Activated B cell treated with CpG ODN at 0.5 μM for 24 hours (primary cell): ENCODE measurements at regions of chr22 and their contacts with region 1.

Region 1: GRCh38 chr22:20116951-20117645 is at the start of gene TRMT2A:
- DNase-seq: peak; percentile 97
- ATAC-seq: peak; percentile 81
- H3K4me3 Mint-ChIP-seq: peak within 1 kb of the TSS; percentile 91
- H3K27ac Mint-ChIP-seq: peak within 1 kb of the TSS; percentile 92
- H3K4me1 Mint-ChIP-seq: peaks cover 44% of the 10 kb centered on the region
- H3K27me3 Mint-ChIP-seq: no peaks in the 10 kb centered on the region
- CTCF ChIP-seq: no peak
- total RNA-seq, gene TRMT2A: 77.4 and 91.7 TPM in 2 replicates

Region 2: GRCh38 chr22:19970479-19971275 is 146.4 kb before region 1 on chr22:
- CTCF ChIA-PET with region 1: no interaction called
- POLR2A ChIA-PET with region 1: no interaction called
- intact Hi-C with region 1: loop called (anchors 2 kb)
- DNase-seq: peak; percentile 74
- ATAC-seq: peak; percentile 87
- H3K4me3 Mint-ChIP-seq: no peak overlapping the region
- H3K27ac Mint-ChIP-seq: no peak overlapping the region
- H3K4me1 Mint-ChIP-seq: peaks cover 9% of the 10 kb centered on the region
- H3K27me3 Mint-ChIP-seq: no peaks in the 10 kb centered on the region
- CTCF ChIP-seq: peak; percentile 43

Region 3: DNA sequence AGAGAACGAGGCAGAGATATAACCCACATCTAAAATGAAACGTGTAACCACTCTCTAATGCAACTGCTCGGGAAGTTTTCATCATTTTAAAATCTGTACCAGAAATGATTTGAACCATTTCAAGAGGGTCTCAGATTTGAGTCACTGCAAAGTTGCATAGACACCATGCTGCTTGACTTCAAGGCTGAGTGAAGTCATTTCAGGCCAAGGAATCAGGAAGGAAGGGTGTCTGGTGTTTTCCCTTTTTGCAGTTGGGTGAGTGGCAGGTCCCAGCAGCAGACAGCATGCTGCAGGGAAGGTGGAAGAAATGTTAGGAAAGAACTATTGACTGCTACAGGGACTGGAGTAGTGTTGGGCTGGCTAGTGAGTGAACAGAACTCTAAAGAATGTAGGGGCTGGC is 79.7 kb before region 1 on chr22:
- CTCF ChIA-PET with region 1: no interaction called
- POLR2A ChIA-PET with region 1: interaction called, 3 read pairs
- intact Hi-C with region 1: loop called (anchors 5 kb)
- DNase-seq: no peak
- ATAC-seq: peak; percentile 26
- H3K4me3 Mint-ChIP-seq: peak overlapping the region; percentile 56
- H3K27ac Mint-ChIP-seq: peak overlapping the region; percentile 85
- H3K4me1 Mint-ChIP-seq: peaks cover 62% of the 10 kb centered on the region
- H3K27me3 Mint-ChIP-seq: no peaks in the 10 kb centered on the region
- CTCF ChIP-seq: no peak

Region 4: DNA sequence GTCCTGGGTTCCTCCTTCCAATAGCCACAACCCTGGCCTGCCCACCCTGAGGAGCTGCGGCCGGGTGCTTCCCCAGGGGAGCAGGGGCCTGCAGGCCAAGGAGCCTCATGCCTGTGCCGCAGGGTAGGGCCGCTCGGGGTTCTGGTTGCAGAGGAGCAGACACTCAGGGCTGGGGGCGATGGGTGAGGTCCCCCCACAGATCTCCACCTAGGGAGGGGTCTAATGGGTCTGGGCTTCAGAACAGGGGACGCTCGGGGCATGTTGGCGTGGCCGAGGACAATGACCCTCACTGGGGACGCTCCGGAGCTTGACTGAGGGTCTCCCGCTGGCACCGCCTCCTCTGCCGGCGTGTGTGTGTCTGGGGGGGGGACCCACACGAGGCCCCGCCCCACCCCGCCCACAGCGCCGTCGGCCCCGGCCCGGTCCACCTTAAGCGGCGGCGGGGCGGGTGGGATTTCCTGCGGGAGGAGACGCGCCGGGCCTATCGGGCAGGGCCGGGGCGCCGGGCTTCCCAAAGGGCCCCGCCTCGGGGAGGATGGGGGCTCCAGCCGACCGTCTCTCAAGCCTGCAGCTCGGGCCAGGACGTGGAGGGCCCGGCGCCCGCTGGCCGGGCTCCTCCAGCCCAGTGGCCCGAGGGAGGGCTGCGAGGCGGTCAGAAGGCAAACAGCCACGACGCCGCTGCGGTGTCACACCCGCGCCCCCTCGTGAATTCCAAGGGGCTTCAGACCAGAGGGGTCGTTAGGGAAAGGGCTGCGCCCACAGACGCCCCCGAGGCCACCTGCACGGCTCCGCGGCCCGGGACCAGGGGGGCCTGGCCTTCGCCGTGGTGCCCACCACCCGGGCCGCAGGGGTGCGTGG is 13.9 kb after region 1 on chr22:
- CTCF ChIA-PET with region 1: no interaction called
- POLR2A ChIA-PET with region 1: interaction called, 8 read pairs
- intact Hi-C with region 1: loop called (anchors 1 kb)
- DNase-seq: peak; percentile 75
- ATAC-seq: peak; percentile 83
- H3K4me3 Mint-ChIP-seq: peak overlapping the region; percentile 70
- H3K27ac Mint-ChIP-seq: no peak overlapping the region
- H3K4me1 Mint-ChIP-seq: peaks cover 34% of the 10 kb centered on the region
- H3K27me3 Mint-ChIP-seq: no peaks in the 10 kb centered on the region
- CTCF ChIP-seq: no peak

Region 5: GRCh38 chr22:20279662-20280134 is 162.6 kb after region 1 on chr22:
- CTCF ChIA-PET with region 1: no interaction called
- POLR2A ChIA-PET with region 1: no interaction called
- intact Hi-C with region 1: no loop called
- DNase-seq: no peak
- ATAC-seq: no peak
- H3K4me3 Mint-ChIP-seq: no peak overlapping the region
- H3K27ac Mint-ChIP-seq: no peak overlapping the region
- H3K4me1 Mint-ChIP-seq: no peaks in the 10 kb centered on the region
- H3K27me3 Mint-ChIP-seq: no peaks in the 10 kb centered on the region
- CTCF ChIP-seq: no peak

Region 6: GRCh38 chr22:20319745-20320658 is 202.9 kb after region 1 on chr22 and contains the start of gene DGCR6L:
- CTCF ChIA-PET with region 1: no interaction called
- POLR2A ChIA-PET with region 1: no interaction called
- intact Hi-C with region 1: loop called (anchors 1 kb)
- DNase-seq: peak; percentile 97
- ATAC-seq: peak; percentile 90
- H3K4me3 Mint-ChIP-seq: peak within 1 kb of the TSS; percentile 89
- H3K27ac Mint-ChIP-seq: peak within 1 kb of the TSS; percentile 65
- H3K4me1 Mint-ChIP-seq: peaks cover 30% of the 10 kb centered on the region
- H3K27me3 Mint-ChIP-seq: no peaks in the 10 kb centered on the region
- CTCF ChIP-seq: no peak
- total RNA-seq, gene DGCR6L: 12.4 and 16.2 TPM in 2 replicates

Region 7: DNA sequence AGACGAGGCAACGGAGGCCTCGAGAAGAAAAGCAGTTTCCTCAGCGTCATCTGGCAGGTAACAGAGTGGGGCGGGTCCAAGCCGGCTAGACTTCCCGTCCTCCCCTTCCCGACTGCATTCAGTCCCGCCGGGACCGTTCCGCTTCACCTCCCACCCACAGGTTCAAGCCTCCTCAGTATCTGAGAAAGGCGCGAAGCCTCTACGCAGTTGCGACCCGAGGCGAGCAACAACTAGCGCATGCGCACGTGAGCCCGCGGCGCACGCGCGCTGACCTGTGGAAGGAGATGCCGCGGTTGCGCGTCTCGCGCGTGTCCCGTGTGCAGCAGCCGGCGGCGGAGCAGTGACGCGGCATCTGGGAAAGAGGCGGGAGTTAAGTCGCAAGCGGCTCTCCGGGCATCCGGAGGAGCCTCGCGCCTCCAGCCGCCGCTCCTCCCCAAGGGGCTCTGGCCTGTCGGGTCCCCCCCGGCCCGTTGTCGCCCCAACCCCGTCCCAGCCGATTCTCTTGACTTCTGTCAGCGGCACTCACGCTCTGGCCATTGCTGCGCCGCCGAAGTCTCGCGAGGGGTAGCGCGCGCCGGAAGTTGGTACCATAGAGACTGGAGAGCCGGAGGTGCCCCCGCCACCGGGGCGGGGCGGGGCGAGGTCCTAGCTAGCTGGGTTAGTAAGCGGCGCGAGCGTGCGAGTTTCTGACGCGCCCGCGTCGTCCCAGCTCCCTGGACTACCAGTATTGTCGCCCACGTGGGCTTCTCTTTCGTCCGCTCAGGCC is 884.6 kb after region 1 on chr22 and contains the start of gene THAP7:
- CTCF ChIA-PET with region 1: no interaction called
- POLR2A ChIA-PET with region 1: interaction called, 5 read pairs
- intact Hi-C with region 1: loop called (anchors 2 kb)
- DNase-seq: peak; percentile 97
- ATAC-seq: peak; percentile 88
- H3K4me3 Mint-ChIP-seq: peak within 1 kb of the TSS; percentile 93
- H3K27ac Mint-ChIP-seq: peak within 1 kb of the TSS; percentile 98
- H3K4me1 Mint-ChIP-seq: peaks cover 26% of the 10 kb centered on the region
- H3K27me3 Mint-ChIP-seq: no peaks in the 10 kb centered on the region
- CTCF ChIP-seq: no peak
- total RNA-seq, gene THAP7: 27.1 and 32.3 TPM in 2 replicates